ENCODE measurements at regions of chr10 and their contacts with region 1.

Region 1: DNA sequence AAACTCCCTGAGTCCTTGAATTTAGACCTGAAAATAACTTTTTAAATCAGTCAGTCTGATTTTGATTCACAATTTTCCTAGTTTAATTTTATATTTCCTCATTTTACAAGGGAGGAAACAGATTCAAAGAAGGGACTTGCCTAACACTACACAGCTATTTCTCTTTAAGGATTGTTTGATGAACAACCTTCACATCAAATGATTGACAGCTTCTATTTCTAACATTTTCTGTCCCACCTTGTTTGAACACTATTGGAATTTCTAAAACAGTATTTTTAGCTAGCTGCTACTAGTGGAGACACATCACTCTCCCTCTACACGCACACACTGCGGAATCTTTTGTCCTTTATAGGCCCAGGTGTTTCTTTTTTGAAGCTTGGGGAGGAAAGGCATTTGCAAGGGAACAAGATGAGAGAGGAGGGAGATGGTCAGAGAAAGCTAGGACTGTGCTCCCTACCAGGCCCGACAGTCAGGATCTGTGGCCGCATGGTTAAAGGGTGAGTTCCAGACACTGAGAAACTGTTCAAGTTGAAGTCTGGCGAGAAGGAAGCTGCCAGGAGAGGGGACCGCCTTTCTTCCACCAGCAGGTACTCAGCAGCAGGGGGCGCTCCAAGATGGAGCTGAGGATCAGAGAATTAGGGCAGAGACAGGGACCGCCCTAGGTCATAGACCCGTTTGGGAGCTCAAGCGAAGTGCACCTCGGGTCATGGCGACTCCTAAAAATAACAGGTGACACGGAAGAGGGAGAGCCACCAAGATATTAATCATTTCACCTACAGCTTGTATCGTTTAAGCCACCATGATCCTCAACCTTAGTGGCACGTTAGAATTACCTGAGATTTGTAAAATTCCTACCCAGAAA is 49.7 kb downstream of the DNAJC12 start:
- DNase-seq: peak; percentile 23 to 74 (median 52)
- ATAC-seq: peak; percentile 84
- H3K4me3 ChIP-seq: no peak overlapping the region
- H3K4me3 Mint-ChIP-seq: peak overlapping the region in 5 of 10 donors; percentile 2 to 71 (median 59)
- H3K27ac ChIP-seq: no peak overlapping the region
- H3K27ac Mint-ChIP-seq: peak overlapping the region in 3 of 9 donors; percentile 15 to 79 (median 35)
- H3K4me1 ChIP-seq: peaks cover 0 to 4% of the 10 kb centered on the region in 2 donors
- H3K4me1 Mint-ChIP-seq: peaks cover 11 to 54% (median 15%) of the 10 kb centered on the region in 7 donors
- H3K27me3 ChIP-seq: no peaks in the 10 kb centered on the region
- H3K27me3 Mint-ChIP-seq: no peaks in the 10 kb centered on the region

Region 2: DNA sequence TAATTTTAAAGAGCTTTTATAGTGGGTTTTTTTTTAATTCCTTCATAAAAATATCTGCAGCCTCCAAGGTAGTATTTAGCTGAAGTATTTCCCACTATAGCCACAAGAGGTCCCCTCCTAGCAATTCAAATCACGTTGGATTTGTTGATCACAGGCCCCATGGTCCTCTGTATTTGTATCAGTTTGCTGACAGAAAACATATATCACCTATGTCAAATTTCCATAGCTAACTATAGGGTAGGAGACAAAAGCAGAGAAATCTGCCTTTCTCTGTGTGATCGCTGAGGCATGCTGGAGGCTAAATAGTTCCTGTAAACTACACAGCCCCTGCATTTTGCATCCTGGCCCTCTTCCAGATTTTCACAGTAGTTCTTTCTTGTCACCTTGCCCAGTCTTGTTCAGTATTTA is 90.5 kb before region 1 on chr10:
- CTCF ChIA-PET with region 1: interaction called, 29 read pairs
- POLR2A ChIA-PET with region 1: no interaction called
- intact Hi-C with region 1: no loop called
- DNase-seq: peak in 7 of 9 donors; percentile 34 to 68 (median 56)
- ATAC-seq: peak; percentile 88
- H3K4me3 ChIP-seq: no peak overlapping the region
- H3K4me3 Mint-ChIP-seq: no peak overlapping the region
- H3K27ac ChIP-seq: no peak overlapping the region
- H3K27ac Mint-ChIP-seq: peak overlapping the region in 1 of 9 donors; percentile 56
- H3K4me1 ChIP-seq: no peaks in the 10 kb centered on the region
- H3K4me1 Mint-ChIP-seq: peaks cover 0 to 15% (median 5%) of the 10 kb centered on the region in 7 donors
- H3K27me3 ChIP-seq: no peaks in the 10 kb centered on the region
- H3K27me3 Mint-ChIP-seq: peaks cover 4 to 41% (median 29%) of the 10 kb centered on the region in 5 donors

Region 3: GRCh38 chr10:67837541-67838314 is 49.5 kb after region 1 on chr10 and contains the start of gene DNAJC12:
- CTCF ChIA-PET with region 1: no interaction called
- POLR2A ChIA-PET with region 1: no interaction called
- intact Hi-C with region 1: loop called in 1 of 2 experiments (anchors 1 kb)
- DNase-seq: peak in 5 of 9 donors; percentile 5 to 29 (median 12)
- ATAC-seq: peak; percentile 90
- H3K4me3 ChIP-seq: no peak within 1 kb of the TSS
- H3K4me3 Mint-ChIP-seq: peak within 1 kb of the TSS in 4 of 10 donors; percentile 3 to 82 (median 31)
- H3K27ac ChIP-seq: no peak within 1 kb of the TSS
- H3K27ac Mint-ChIP-seq: peak within 1 kb of the TSS in 4 of 9 donors; percentile 3 to 63 (median 37)
- H3K4me1 ChIP-seq: no peaks in the 10 kb centered on the region
- H3K4me1 Mint-ChIP-seq: peaks cover 0 to 12% (median 5%) of the 10 kb centered on the region in 7 donors
- H3K27me3 ChIP-seq: no peaks in the 10 kb centered on the region
- H3K27me3 Mint-ChIP-seq: no peaks in the 10 kb centered on the region
- total RNA-seq, gene DNAJC12: 7.2 TPM in 1 of 5 experiments, not detected in the others

Region 4: GRCh38 chr10:67884313-67884841 is 96.1 kb after region 1 on chr10 and contains the start of gene SIRT1:
- CTCF ChIA-PET with region 1: interaction called, 6 read pairs
- POLR2A ChIA-PET with region 1: no interaction called
- intact Hi-C with region 1: loop called in 1 of 2 experiments (anchors 2 kb)
- DNase-seq: peak; percentile 87 to 95 (median 90)
- ATAC-seq: peak; percentile 89
- H3K4me3 ChIP-seq: peak within 1 kb of the TSS; percentile 75
- H3K4me3 Mint-ChIP-seq: peak within 1 kb of the TSS; percentile 86 to 98 (median 95)
- H3K27ac ChIP-seq: peak within 1 kb of the TSS; percentile 83
- H3K27ac Mint-ChIP-seq: peak within 1 kb of the TSS; percentile 90 to 98 (median 95)
- H3K4me1 ChIP-seq: peaks cover 12 to 16% of the 10 kb centered on the region in 2 donors
- H3K4me1 Mint-ChIP-seq: peaks cover 27 to 43% (median 35%) of the 10 kb centered on the region in 7 donors
- H3K27me3 ChIP-seq: no peaks in the 10 kb centered on the region
- H3K27me3 Mint-ChIP-seq: peaks cover 0 to 5% (median 0%) of the 10 kb centered on the region in 5 donors
- total RNA-seq, gene SIRT1: 25.9 to 66.8 (median 59.5) TPM

Region 5: DNA sequence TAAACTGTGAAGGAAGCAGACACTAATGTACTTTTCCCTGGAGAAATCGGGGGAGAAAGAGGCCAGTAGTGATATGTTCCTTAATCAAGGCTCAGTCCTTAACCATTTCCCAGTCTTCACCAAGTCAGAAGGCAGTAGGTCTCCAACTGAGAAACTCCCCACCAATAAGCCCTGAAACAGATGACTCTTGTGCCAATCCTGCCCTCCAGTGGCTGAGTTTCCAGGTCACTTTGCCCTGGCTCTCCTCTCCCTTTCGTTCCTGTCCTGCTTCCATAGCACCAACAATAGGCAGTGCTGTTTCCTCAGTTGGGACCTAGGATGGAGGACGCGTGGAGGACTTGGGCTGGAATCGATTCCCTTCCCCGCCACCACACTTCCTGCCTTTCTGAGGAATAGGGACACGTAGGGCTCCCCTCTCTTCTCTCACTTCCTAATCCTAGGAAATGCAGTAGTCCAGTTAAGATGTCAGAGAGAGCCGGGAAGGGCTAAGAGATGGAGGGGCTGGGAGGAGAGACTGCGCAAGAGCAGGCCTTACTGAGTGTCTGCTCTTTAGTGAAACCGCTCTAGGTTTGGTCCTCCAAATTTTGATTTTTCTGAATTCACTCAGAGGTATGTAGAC is 420.3 kb after region 1 on chr10:
- CTCF ChIA-PET with region 1: no interaction called
- POLR2A ChIA-PET with region 1: no interaction called
- intact Hi-C with region 1: loop called (anchors 1 kb)
- DNase-seq: no peak
- ATAC-seq: no peak
- H3K4me3 ChIP-seq: no peak overlapping the region
- H3K4me3 Mint-ChIP-seq: no peak overlapping the region
- H3K27ac ChIP-seq: no peak overlapping the region
- H3K27ac Mint-ChIP-seq: peak overlapping the region in 1 of 9 donors; percentile 22
- H3K4me1 ChIP-seq: no peaks in the 10 kb centered on the region
- H3K4me1 Mint-ChIP-seq: peaks cover 0 to 4% (median 0%) of the 10 kb centered on the region in 7 donors
- H3K27me3 ChIP-seq: no peaks in the 10 kb centered on the region
- H3K27me3 Mint-ChIP-seq: peaks cover 0 to 36% (median 10%) of the 10 kb centered on the region in 5 donors

Region 6: DNA sequence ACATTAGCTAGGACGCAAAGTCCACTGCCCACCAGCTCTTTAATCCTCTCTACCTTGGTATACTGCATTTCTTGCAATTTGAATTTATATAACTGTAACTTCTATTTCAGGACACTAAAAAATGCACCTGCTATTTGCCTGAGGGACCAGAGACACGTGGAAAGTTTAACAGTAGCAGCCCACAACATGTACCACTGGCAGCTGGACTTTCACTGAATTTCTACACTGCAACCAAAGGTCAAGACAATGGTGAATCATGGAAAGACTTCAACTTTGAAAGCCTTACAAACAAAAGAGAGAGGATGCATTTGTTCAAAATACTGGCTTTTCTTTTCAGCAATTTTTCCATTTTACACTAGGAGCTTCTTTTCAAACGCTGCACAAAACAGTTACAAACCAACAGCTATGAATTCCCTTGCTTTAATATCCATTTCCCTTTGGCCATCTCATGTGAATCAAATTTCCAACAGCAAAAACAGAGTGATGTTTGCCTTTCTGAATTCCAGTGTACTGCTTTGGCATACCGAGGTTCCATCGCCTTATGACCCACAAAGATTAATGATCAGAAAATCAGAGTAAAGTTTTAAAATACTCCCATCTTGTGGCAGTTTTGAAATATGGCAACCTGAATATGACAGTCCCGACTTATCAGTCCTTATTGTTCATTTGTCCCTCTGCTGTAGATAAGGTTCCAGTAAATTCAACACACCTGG is 513.7 kb after region 1 on chr10:
- CTCF ChIA-PET with region 1: interaction called, 7 read pairs
- POLR2A ChIA-PET with region 1: no interaction called
- intact Hi-C with region 1: loop called in 1 of 2 experiments (anchors 5 kb)
- DNase-seq: peak in 5 of 9 donors; percentile 12 to 38 (median 24)
- ATAC-seq: peak; percentile 66
- H3K4me3 ChIP-seq: no peak overlapping the region
- H3K4me3 Mint-ChIP-seq: no peak overlapping the region
- H3K27ac ChIP-seq: no peak overlapping the region
- H3K27ac Mint-ChIP-seq: no peak overlapping the region
- H3K4me1 ChIP-seq: no peaks in the 10 kb centered on the region
- H3K4me1 Mint-ChIP-seq: peaks cover 0 to 4% (median 0%) of the 10 kb centered on the region in 7 donors
- H3K27me3 ChIP-seq: no peaks in the 10 kb centered on the region
- H3K27me3 Mint-ChIP-seq: no peaks in the 10 kb centered on the region

Measured in naive thymus-derived CD4-positive, alpha-beta T cell (primary cell).